CD8-positive, alpha-beta T cell (primary cell): ENCODE measurements at regions of chr11 and their contacts with region 1.

Region 1: DNA sequence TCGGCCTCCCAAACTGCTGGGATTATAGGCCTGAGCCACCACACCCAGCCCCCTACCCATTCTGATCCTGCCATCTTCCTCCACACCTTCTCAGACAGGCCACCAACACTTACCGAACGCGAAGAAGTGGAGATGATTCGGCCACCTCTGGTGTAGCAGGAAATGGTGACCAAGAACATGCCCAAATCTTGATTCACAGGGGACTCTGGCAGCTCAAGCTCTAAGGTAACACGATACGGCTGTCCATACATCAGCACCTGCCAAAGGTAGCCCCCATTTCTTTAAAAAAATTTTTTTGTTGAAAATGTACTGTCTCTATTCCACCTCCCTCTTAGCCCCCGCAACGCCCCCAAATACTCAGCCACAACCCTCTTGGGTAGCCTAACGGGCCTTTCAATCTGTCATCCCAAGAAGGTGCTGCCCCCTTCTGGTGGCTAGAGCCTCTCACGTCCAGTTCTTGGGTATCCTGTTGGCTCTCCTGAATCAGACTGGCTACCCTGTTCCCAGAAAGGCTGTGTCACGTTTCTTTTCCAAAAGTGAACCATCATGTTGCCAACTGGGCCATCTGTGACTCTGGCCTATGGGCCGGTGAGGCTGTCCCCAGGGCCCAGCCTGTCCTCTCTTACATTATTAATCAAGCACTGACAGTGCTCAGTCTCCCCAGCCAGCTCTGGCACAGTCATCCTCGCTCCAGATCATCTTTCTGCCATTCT is 5.3 kb upstream of the LRRN4CL start:
- DNase-seq: peak; percentile 57 to 88 (median 81)
- ATAC-seq: peak; percentile 91
- H3K4me3 ChIP-seq: no peak overlapping the region
- H3K4me3 Mint-ChIP-seq: no peak overlapping the region
- H3K27ac ChIP-seq: no peak overlapping the region
- H3K27ac Mint-ChIP-seq: no peak overlapping the region
- H3K4me1 ChIP-seq: peaks cover 6% of the 10 kb centered on the region
- H3K4me1 Mint-ChIP-seq: peaks cover 3% of the 10 kb centered on the region
- H3K27me3 ChIP-seq: no peaks in the 10 kb centered on the region
- H3K27me3 Mint-ChIP-seq: no peaks in the 10 kb centered on the region
- CTCF ChIP-seq: peak; percentile 79

Region 2: GRCh38 chr11:62383822-62384221 is 310.8 kb before region 1 on chr11:
- CTCF ChIA-PET with region 1: no interaction called
- POLR2A ChIA-PET with region 1: no interaction called
- intact Hi-C with region 1: loop called in 1 of 2 experiments (anchors 5 kb)
- DNase-seq: no peak
- ATAC-seq: no peak
- H3K4me3 ChIP-seq: no peak overlapping the region
- H3K4me3 Mint-ChIP-seq: no peak overlapping the region
- H3K27ac ChIP-seq: no peak overlapping the region
- H3K27ac Mint-ChIP-seq: no peak overlapping the region
- H3K4me1 ChIP-seq: peaks cover 9% of the 10 kb centered on the region
- H3K4me1 Mint-ChIP-seq: peaks cover 9% of the 10 kb centered on the region
- H3K27me3 ChIP-seq: no peaks in the 10 kb centered on the region
- H3K27me3 Mint-ChIP-seq: no peaks in the 10 kb centered on the region
- CTCF ChIP-seq: no peak

Region 3: GRCh38 chr11:62612366-62613290 is 82.0 kb before region 1 on chr11 and contains the starts of genes EML3 and ROM1:
- CTCF ChIA-PET with region 1: interaction called, 5 read pairs
- POLR2A ChIA-PET with region 1: no interaction called
- intact Hi-C with region 1: loop called in 1 of 2 experiments (anchors 1 kb)
- DNase-seq: peak; percentile 79 to 95 (median 88)
- ATAC-seq: peak; percentile 72
- H3K4me3 ChIP-seq: peak within 1 kb of the TSS; percentile 67 to 97
- H3K4me3 Mint-ChIP-seq: peak within 1 kb of the TSS; percentile 95
- H3K27ac ChIP-seq: peak within 1 kb of the TSS; percentile 91
- H3K27ac Mint-ChIP-seq: peak within 1 kb of the TSS; percentile 99
- H3K4me1 ChIP-seq: peaks cover 38% of the 10 kb centered on the region
- H3K4me1 Mint-ChIP-seq: peaks cover 54% of the 10 kb centered on the region
- H3K27me3 ChIP-seq: no peaks in the 10 kb centered on the region
- H3K27me3 Mint-ChIP-seq: no peaks in the 10 kb centered on the region
- CTCF ChIP-seq: peak; percentile 99
- total RNA-seq, gene EML3: 167 to 189 TPM
- total RNA-seq, gene ROM1: 1.7 to 2.1 TPM

Region 4: GRCh38 chr11:62645956-62646824 is 48.4 kb before region 1 on chr11 and contains the start of gene GANAB:
- CTCF ChIA-PET with region 1: interaction called, 11 read pairs
- POLR2A ChIA-PET with region 1: interaction called, 3 read pairs
- intact Hi-C with region 1: no loop called
- DNase-seq: peak; percentile 96 to 99 (median 99)
- ATAC-seq: peak; percentile 98
- H3K4me3 ChIP-seq: peak within 1 kb of the TSS; percentile 81 to 98
- H3K4me3 Mint-ChIP-seq: peak within 1 kb of the TSS; percentile 98
- H3K27ac ChIP-seq: peak within 1 kb of the TSS; percentile 90 to 98
- H3K27ac Mint-ChIP-seq: peak within 1 kb of the TSS; percentile 98
- H3K4me1 ChIP-seq: peaks cover 27% of the 10 kb centered on the region
- H3K4me1 Mint-ChIP-seq: peaks cover 37% of the 10 kb centered on the region
- H3K27me3 ChIP-seq: no peaks in the 10 kb centered on the region
- H3K27me3 Mint-ChIP-seq: no peaks in the 10 kb centered on the region
- CTCF ChIP-seq: no peak
- total RNA-seq, gene GANAB: 177 to 184 TPM

Region 5: DNA sequence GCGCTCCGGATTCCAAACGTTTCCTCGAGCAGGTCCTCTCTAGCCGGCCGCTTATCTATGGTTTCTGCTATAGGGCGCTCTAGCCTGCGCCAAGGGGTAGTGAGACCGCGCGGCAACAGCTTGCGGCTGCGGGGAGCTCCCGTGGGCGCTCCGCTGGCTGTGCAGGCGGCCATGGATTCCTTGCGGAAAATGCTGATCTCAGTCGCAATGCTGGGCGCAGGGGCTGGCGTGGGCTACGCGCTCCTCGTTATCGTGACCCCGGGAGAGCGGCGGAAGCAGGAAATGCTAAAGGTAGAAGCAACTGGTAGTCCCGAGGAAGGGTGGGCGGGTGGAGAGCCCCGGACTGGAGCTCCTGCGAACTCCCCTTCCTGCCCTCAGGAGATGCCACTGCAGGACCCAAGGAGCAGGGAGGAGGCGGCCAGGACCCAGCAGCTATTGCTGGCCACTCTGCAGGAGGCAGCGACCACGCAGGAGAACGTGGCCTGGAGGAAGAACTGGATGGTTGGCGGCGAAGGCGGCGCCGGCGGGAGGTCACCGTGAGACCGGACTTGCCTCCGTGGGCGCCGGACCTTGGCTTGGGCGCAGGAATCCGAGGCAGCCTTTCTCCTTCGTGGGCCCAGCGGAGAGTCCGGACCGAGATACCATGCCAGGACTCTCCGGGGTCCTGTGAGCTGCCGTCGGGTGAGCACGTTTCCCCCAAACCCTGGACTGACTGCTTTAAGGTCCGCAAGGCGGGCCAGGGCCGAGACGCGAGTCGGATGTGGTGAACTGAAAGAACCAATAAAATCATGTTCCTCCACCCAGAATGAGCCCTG is 22.8 kb before region 1 on chr11 and contains the starts of genes LBHD1 and UQCC3:
- CTCF ChIA-PET with region 1: interaction called, 16 read pairs
- POLR2A ChIA-PET with region 1: interaction called, 8 read pairs
- intact Hi-C with region 1: no loop called
- DNase-seq: peak; percentile 41 to 87 (median 70)
- ATAC-seq: peak; percentile 63
- H3K4me3 ChIP-seq: peak within 1 kb of the TSS; percentile 93 to 99
- H3K4me3 Mint-ChIP-seq: peak within 1 kb of the TSS; percentile 99
- H3K27ac ChIP-seq: peak within 1 kb of the TSS; percentile 77 to 78
- H3K27ac Mint-ChIP-seq: peak within 1 kb of the TSS; percentile 92
- H3K4me1 ChIP-seq: peaks cover 36% of the 10 kb centered on the region
- H3K4me1 Mint-ChIP-seq: peaks cover 62% of the 10 kb centered on the region
- H3K27me3 ChIP-seq: no peaks in the 10 kb centered on the region
- H3K27me3 Mint-ChIP-seq: no peaks in the 10 kb centered on the region
- CTCF ChIP-seq: no peak
- total RNA-seq, gene LBHD1: 14.5 to 14.6 TPM
- total RNA-seq, gene UQCC3: 1.1 to 1.7 TPM

Region 6: GRCh38 chr11:62678770-62679696 is 15.6 kb before region 1 on chr11 and contains the start of gene UBXN1:
- CTCF ChIA-PET with region 1: interaction called, 43 read pairs
- POLR2A ChIA-PET with region 1: interaction called, 3 read pairs
- intact Hi-C with region 1: loop called (anchors 1 to 2 kb)
- DNase-seq: peak; percentile 59 to 92 (median 85)
- ATAC-seq: peak; percentile 74
- H3K4me3 ChIP-seq: peak within 1 kb of the TSS; percentile 91 to 100
- H3K4me3 Mint-ChIP-seq: peak within 1 kb of the TSS; percentile 90
- H3K27ac ChIP-seq: peak within 1 kb of the TSS; percentile 87 to 94
- H3K27ac Mint-ChIP-seq: peak within 1 kb of the TSS; percentile 93
- H3K4me1 ChIP-seq: peaks cover 26% of the 10 kb centered on the region
- H3K4me1 Mint-ChIP-seq: peaks cover 39% of the 10 kb centered on the region
- H3K27me3 ChIP-seq: no peaks in the 10 kb centered on the region
- H3K27me3 Mint-ChIP-seq: no peaks in the 10 kb centered on the region
- CTCF ChIP-seq: no peak
- total RNA-seq, gene UBXN1: 232 to 242 TPM